WTC11 (cell line): ENCODE measurements at regions of chr7 and their contacts with region 1.

Region 1: DNA sequence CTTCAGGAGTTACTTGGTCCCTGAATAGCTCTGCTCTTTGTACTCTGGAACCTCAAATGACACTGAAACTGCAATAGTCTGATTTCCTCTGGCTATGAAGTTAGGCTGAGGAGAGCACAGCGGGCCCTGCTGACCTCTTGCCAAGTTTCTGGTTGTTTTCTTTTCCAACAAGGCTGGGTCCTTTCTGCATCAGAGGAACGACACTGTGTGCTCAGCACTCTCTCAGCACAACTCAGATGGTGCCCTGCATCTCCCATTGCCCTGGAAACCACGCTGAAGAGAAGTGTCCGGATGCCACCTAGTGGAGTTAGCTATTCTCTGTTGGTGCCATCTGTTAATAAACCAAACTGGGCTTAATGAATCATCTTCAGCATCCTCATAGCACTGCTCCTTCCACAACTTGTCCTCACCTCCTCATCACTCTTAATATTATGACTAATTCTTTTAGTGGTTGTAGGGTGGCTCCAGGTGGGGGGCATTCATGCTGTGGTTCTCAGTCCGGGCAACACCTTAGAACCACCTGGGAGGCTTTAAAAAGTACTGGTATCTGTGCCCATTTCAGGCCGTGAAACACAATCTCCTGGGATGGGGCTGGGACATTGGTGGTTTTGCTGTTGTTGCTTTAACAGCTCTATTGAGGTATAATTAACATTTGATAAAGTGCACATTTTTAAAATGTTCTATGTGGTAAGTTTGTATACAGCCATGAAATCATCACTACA is 8.2 kb upstream of the EFCAB10 start:
- DNase-seq: peak; percentile 66
- ATAC-seq: peak; percentile 94
- H3K4me3 Mint-ChIP-seq: no peak overlapping the region
- H3K27ac Mint-ChIP-seq: no peak overlapping the region
- H3K4me1 Mint-ChIP-seq: peaks cover 13% of the 10 kb centered on the region
- H3K27me3 Mint-ChIP-seq: no peaks in the 10 kb centered on the region
- CTCF ChIP-seq: peak; percentile 43

Region 2: DNA sequence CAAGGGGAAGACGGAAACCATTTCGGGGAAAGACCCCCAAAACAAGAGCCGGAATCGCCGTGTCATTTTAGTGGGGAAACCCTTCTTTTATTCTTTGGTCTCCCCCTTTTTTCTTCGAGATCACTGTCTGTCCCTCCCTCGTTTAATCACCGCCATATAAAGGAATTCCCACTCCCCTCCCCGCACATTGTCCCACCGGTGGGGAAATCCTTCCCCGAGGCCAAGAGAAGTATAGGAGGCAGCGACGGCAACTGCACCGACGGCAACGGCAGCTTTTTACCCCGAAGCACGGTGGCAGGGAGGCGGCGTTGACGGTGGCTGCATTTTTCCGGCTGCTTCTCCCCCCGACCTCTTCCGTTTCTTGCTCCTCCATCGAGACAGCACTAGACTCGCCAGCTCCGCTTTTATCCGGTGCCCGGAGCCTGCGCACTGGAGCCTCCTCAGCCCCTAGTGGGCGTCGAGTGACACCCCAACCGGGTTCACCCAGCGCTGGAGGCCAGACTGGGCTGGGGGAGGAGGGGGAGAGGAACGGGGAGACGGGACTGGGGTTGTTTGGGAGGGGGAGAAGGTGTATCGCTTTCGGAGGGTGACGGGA is 576.2 kb before region 1 on chr7:
- CTCF ChIA-PET with region 1: no interaction called
- POLR2A ChIA-PET with region 1: interaction called, 11 read pairs
- DNase-seq: peak; percentile 93
- ATAC-seq: peak; percentile 65
- H3K4me3 Mint-ChIP-seq: peak overlapping the region; percentile 99
- H3K27ac Mint-ChIP-seq: peak overlapping the region; percentile 100
- H3K4me1 Mint-ChIP-seq: peaks cover 42% of the 10 kb centered on the region
- H3K27me3 Mint-ChIP-seq: no peaks in the 10 kb centered on the region
- CTCF ChIP-seq: peak; percentile 11; the same call in 1 of the 2 replicates

Region 3: GRCh38 chr7:105531792-105532671 is 57.5 kb before region 1 on chr7 and contains the start of gene RINT1:
- CTCF ChIA-PET with region 1: interaction called, 14 read pairs
- POLR2A ChIA-PET with region 1: no interaction called
- DNase-seq: peak; percentile 90
- ATAC-seq: peak; percentile 100
- H3K4me3 Mint-ChIP-seq: peak within 1 kb of the TSS; percentile 94
- H3K27ac Mint-ChIP-seq: peak within 1 kb of the TSS; percentile 41
- H3K4me1 Mint-ChIP-seq: peaks cover 12% of the 10 kb centered on the region
- H3K27me3 Mint-ChIP-seq: no peaks in the 10 kb centered on the region
- CTCF ChIP-seq: no peak
- total RNA-seq, gene RINT1: 20.3 to 26.6 TPM (median 23.1 TPM) in 3 replicates

Region 4: DNA sequence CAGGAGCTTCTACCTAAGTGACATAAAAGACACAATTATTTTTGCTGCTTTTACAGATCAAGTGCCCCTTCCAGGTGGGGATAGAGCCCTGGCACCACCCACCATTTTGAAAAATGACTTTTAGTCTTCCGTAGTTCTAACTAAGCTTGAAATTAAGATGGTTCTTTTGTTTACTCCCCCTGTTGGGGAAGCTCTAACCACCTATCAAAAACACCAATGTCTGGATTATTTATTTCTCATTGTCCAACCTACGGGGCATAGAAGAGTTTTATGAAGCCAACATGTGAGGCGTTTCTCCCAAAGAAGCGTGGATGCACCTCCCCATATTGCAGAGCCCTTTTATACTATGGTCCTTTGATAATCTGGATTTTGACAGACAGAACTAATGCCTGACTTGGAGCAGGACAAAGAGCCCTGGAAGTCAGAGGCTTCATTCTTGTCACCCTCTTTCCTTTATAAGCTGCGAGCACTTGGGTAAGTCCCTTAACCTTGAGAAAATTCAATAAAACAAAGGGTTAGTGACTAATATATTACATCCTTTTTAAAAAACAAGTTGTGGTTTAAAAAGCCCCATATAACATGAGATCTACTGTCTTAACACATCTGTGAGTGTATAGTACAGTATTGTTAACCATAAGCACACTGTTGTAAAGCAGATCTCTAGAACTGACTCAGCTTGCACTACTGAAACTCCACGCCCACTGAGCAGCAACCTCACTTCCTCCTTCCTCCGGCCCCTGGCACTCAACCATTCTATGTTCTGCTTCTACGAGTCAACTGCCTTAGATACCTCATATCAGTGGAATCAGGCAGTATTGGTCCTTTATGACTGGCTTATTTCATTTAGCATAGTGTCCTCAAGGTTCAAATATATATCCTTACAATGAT is 219.4 kb after region 1 on chr7:
- CTCF ChIA-PET with region 1: no interaction called
- POLR2A ChIA-PET with region 1: no interaction called
- DNase-seq: no peak
- ATAC-seq: no peak
- H3K4me3 Mint-ChIP-seq: no peak overlapping the region
- H3K27ac Mint-ChIP-seq: no peak overlapping the region; the same call in 1 of the 2 replicates
- H3K4me1 Mint-ChIP-seq: peaks cover 25% of the 10 kb centered on the region
- H3K27me3 Mint-ChIP-seq: no peaks in the 10 kb centered on the region
- CTCF ChIP-seq: no peak